Body of pancreas (tissue), 4 donors: ENCODE measurements at regions of chr6 and their contacts with region 1.

Region 1: GRCh38 chr6:43250992-43251373 is 7.7 kb downstream of the TTBK1 start:
- DNase-seq: no peak
- ATAC-seq: no peak
- H3K4me3 ChIP-seq: no peak overlapping the region
- H3K27ac ChIP-seq: no peak overlapping the region
- H3K4me1 ChIP-seq: peaks cover 16% of the 10 kb centered on the region
- H3K27me3 ChIP-seq: peaks cover 0 to 4% of the 10 kb centered on the region in 2 donors
- CTCF ChIP-seq: no peak
- POLR2A ChIP-seq: no peak

Region 2: GRCh38 chr6:43334466-43335095 is 83.6 kb after region 1 on chr6:
- intact Hi-C with region 1: loop called (anchors 10 kb)
- DNase-seq: peak in 1 of 4 donors; percentile 13
- ATAC-seq: peak; percentile 68
- H3K4me3 ChIP-seq: no peak overlapping the region
- H3K27ac ChIP-seq: peak overlapping the region in 3 of 4 donors; percentile 6 to 54 (median 9)
- H3K4me1 ChIP-seq: peaks cover 18% of the 10 kb centered on the region
- H3K27me3 ChIP-seq: no peaks in the 10 kb centered on the region
- CTCF ChIP-seq: peak in 6 of 7 experiments; percentile 13 to 62 (median 52)
- POLR2A ChIP-seq: no peak

Region 3: GRCh38 chr6:43506667-43507471 is 255.9 kb after region 1 on chr6:
- intact Hi-C with region 1: loop called (anchors 10 kb)
- DNase-seq: peak; percentile 80 to 86 (median 82)
- ATAC-seq: peak; percentile 66
- H3K4me3 ChIP-seq: no peak overlapping the region
- H3K27ac ChIP-seq: no peak overlapping the region
- H3K4me1 ChIP-seq: peaks cover 23% of the 10 kb centered on the region
- H3K27me3 ChIP-seq: no peaks in the 10 kb centered on the region
- CTCF ChIP-seq: peak; percentile 93 to 97 (median 94)
- POLR2A ChIP-seq: no peak